ENCODE measurements at regions of chr12 and their contacts with region 1.

Region 1: GRCh38 chr12:69415471-69416275 is 54.5 kb upstream of the FRS2 start:
- DNase-seq: peak; percentile 85 to 89
- H3K4me3 ChIP-seq: peak overlapping the region; percentile 23
- H3K4me3 Mint-ChIP-seq: peak overlapping the region; percentile 78
- H3K27ac Mint-ChIP-seq: peak overlapping the region; percentile 99
- H3K4me1 ChIP-seq: peaks cover 56% of the 10 kb centered on the region
- H3K4me1 Mint-ChIP-seq: peaks cover 64% of the 10 kb centered on the region
- H3K27me3 ChIP-seq: no peaks in the 10 kb centered on the region
- H3K27me3 Mint-ChIP-seq: no peaks in the 10 kb centered on the region
- CTCF ChIP-seq: peak; percentile 82 to 88

Region 2: GRCh38 chr12:69348162-69348938 is 67.3 kb before region 1 on chr12 and contains the start of gene LYZ:
- CTCF ChIA-PET with region 1: interaction called, 5 read pairs
- POLR2A ChIA-PET with region 1: interaction called, 12 read pairs
- intact Hi-C with region 1: no loop called
- DNase-seq: no peak
- H3K4me3 ChIP-seq: no peak within 1 kb of the TSS
- H3K4me3 Mint-ChIP-seq: no peak within 1 kb of the TSS
- H3K27ac Mint-ChIP-seq: peak within 1 kb of the TSS; percentile 16
- H3K4me1 ChIP-seq: peaks cover 32% of the 10 kb centered on the region
- H3K4me1 Mint-ChIP-seq: peaks cover 9% of the 10 kb centered on the region
- H3K27me3 ChIP-seq: no peaks in the 10 kb centered on the region
- H3K27me3 Mint-ChIP-seq: no peaks in the 10 kb centered on the region
- CTCF ChIP-seq: no peak
- total RNA-seq, gene LYZ: 16.8 and 16.9 TPM in 2 replicates

Region 3: DNA sequence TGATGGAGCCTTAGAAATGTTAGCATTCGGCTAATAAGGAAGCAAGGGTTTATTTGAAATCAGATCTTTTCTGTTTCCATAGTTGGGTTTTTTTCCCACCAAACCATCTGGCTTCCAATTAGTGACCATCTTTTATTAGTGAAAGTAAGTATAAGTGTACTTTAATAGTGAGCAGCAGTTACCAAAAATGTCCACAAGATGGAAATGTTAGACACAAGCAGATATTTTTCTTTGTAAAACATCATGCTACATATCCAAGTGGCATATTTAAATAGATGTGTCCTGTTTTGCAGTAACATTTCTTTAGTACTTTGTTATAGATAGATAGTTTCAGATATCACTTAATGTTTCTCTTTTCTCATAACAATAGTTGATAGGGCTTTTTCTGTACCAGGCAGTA is 27.3 kb before region 1 on chr12:
- CTCF ChIA-PET with region 1: interaction called, 5 read pairs
- POLR2A ChIA-PET with region 1: no interaction called
- intact Hi-C with region 1: loop called (anchors 1 kb)
- DNase-seq: peak in 1 of 2 experiments; percentile 50
- H3K4me3 ChIP-seq: no peak overlapping the region
- H3K4me3 Mint-ChIP-seq: no peak overlapping the region
- H3K27ac Mint-ChIP-seq: no peak overlapping the region
- H3K4me1 ChIP-seq: peaks cover 34% of the 10 kb centered on the region
- H3K4me1 Mint-ChIP-seq: peaks cover 15% of the 10 kb centered on the region
- H3K27me3 ChIP-seq: no peaks in the 10 kb centered on the region
- H3K27me3 Mint-ChIP-seq: no peaks in the 10 kb centered on the region
- CTCF ChIP-seq: peak; percentile 43 to 70

Region 4: DNA sequence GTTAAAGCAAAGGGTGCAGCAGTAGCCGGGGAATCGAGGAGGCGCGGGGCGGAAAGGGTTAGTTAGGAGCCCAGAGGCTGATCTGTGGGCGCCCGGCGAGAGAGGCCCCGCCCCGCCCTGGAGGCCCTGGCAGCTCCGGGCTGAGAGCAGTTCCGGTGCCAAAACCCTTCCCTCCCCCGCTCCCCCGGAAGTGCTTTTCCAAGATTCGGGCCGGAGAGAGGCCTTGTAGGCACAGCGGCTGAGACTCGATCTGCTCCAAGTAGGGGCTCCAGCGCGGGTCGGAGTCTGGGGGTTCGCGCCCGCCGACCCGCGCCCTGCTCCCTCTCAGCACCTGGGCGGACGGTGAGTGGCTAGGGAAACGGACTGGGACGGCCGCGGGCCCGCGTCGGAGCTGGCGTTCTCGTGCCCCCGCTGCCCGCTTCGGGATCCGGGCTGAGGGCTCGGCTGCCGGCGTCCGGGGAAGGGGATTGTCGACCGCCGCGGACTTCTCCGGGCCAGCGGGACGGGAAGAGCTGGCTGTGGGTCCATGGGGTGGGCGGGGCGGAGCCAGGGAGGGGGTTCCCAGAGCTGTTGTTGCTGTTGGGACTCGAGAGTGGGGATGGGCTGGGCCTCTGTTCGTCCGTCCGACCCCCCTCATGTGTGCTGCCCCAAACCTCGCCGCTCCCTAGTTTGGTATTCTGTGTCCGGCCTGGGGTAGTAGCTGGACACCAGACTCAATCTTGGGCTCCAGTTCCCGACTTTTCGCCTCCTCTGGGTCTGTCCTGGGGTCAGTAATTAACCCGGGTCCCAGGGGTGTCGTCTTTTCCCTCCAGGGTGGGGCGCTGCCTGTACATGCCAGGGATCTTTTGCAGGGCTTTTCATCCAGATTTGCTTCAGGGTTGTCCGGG is 54.8 kb after region 1 on chr12 and contains the start of gene FRS2:
- CTCF ChIA-PET with region 1: interaction called, 5 read pairs
- POLR2A ChIA-PET with region 1: interaction called, 23 read pairs
- intact Hi-C with region 1: loop called (anchors 1 kb)
- DNase-seq: peak; percentile 95
- H3K4me3 ChIP-seq: peak within 1 kb of the TSS; percentile 59
- H3K4me3 Mint-ChIP-seq: peak within 1 kb of the TSS; percentile 86
- H3K27ac Mint-ChIP-seq: peak within 1 kb of the TSS; percentile 95
- H3K4me1 ChIP-seq: peaks cover 41% of the 10 kb centered on the region
- H3K4me1 Mint-ChIP-seq: peaks cover 67% of the 10 kb centered on the region
- H3K27me3 ChIP-seq: no peaks in the 10 kb centered on the region
- H3K27me3 Mint-ChIP-seq: no peaks in the 10 kb centered on the region
- CTCF ChIP-seq: peak; percentile 16 to 37
- total RNA-seq, gene FRS2: 82.3 and 86.5 TPM in 2 replicates

Region 5: DNA sequence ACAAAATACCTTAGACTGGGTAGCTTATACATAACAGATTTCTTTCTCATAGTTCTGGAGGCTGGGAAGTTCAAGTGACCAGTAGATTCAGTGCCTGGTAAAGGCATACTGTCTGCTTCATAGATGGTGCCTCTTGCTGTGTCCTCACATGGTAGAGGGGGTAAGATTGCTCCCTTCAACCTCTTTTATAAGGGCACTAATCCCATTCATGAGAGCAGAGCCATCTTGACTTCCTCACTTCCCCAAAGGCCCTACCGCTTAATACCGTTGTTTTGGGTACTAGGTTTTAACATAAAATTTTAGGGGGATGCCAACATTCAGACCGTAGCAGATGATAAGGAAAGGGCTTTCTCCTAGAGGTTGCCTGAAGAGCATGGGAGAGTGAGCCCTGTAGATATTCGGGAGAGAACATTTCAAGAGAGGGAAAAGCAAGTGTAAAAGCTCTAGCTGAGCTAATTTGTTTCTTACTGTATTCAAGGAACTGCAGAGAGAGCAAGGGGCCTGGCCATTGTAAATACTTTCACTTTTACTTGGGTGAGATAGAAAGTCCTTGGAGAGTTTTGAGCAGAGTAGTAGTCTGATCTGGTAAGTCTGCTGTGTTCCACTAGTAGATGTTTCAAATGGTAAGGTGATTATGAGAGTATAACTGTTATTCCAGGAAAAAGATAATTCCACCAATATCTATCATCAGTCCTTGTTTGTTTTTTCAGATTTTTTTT is 81.8 kb after region 1 on chr12:
- CTCF ChIA-PET with region 1: no interaction called
- POLR2A ChIA-PET with region 1: no interaction called
- intact Hi-C with region 1: no loop called
- DNase-seq: no peak
- H3K4me3 ChIP-seq: no peak overlapping the region
- H3K4me3 Mint-ChIP-seq: no peak overlapping the region
- H3K27ac Mint-ChIP-seq: no peak overlapping the region
- H3K4me1 ChIP-seq: peaks cover 14% of the 10 kb centered on the region; the same call in 1 of the 2 replicates
- H3K4me1 Mint-ChIP-seq: peaks cover 39% of the 10 kb centered on the region
- H3K27me3 ChIP-seq: no peaks in the 10 kb centered on the region
- H3K27me3 Mint-ChIP-seq: no peaks in the 10 kb centered on the region
- CTCF ChIP-seq: no peak

Region 6: DNA sequence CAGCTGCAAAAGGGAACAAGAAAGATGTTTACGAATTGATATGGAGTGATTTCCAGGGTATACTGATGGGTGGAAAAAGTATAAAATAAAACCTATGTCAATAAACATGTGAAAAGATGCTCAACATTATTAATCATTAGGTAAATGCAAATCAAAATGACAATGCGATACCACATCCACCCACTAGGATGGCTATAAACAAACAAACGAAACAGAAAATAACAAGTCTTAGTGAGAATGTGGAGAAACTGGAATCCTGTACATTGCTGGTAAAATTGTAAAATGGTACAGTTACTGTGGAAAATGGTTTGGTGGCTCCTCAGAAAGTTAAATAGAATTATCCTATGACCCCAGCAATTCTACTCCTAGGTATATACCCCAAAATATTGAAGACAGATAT is 293.0 kb after region 1 on chr12:
- CTCF ChIA-PET with region 1: no interaction called
- POLR2A ChIA-PET with region 1: interaction called, 13 read pairs
- intact Hi-C with region 1: no loop called
- DNase-seq: no peak
- H3K4me3 ChIP-seq: no peak overlapping the region
- H3K4me3 Mint-ChIP-seq: no peak overlapping the region
- H3K27ac Mint-ChIP-seq: no peak overlapping the region
- H3K4me1 ChIP-seq: no peaks in the 10 kb centered on the region
- H3K4me1 Mint-ChIP-seq: no peaks in the 10 kb centered on the region
- H3K27me3 ChIP-seq: no peaks in the 10 kb centered on the region
- H3K27me3 Mint-ChIP-seq: peaks cover 3% of the 10 kb centered on the region
- CTCF ChIP-seq: no peak